ENCODE measurements at regions of chr1 and their contacts with region 1.

Region 1: DNA sequence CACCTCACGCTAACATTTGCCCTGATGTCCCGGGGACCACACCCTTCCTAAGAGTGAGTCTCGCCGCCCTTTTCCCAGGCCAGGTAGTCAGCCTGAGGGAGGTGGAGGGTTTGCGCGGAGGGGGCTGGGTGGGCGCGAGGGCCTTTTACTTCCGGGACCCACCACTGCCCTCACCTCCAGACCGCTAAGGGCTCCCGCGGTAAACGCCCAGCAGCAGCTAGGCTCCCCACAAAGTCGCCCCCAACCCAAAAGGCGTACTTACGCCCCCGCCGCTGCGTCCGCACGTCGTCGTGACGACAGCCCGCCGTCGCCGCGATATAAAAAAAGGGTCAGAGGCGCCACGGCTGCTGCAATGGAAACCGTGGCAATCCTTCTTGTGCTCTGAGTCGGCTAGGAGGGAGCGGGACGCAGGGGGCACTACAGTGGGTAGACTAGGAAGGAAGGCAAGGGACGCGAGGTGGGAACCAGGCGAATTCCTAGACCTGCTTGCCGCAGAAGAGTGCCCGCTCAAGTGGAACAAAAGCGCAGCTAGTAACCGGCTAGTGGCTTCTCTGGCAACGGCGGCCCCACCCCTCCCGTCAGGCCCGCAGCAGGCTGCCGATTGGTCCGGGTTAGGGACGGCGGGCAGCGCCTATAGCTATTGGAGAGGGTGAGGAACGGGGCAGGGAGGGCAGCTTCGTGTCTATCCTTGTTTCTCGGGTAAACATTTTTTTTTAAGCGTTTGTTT is at the start of gene ODF2L:
- DNase-seq: peak; percentile 90
- ATAC-seq: peak; percentile 99
- H3K4me3 ChIP-seq: peak within 1 kb of the TSS; percentile 83 to 98 (median 87)
- H3K4me3 Mint-ChIP-seq: peak within 1 kb of the TSS; percentile 99
- H3K27ac ChIP-seq: peak within 1 kb of the TSS; percentile 82 to 90
- H3K27ac Mint-ChIP-seq: peak within 1 kb of the TSS; percentile 97
- H3K4me1 ChIP-seq: peaks cover 12 to 15% of the 10 kb centered on the region in 2 donors
- H3K4me1 Mint-ChIP-seq: peaks cover 36% of the 10 kb centered on the region
- H3K27me3 ChIP-seq: no peaks in the 10 kb centered on the region
- H3K27me3 Mint-ChIP-seq: no peaks in the 10 kb centered on the region
- CTCF ChIP-seq: no peak
- total RNA-seq, gene ODF2L: 61.3 and 65.9 TPM in 2 replicates

Region 2: DNA sequence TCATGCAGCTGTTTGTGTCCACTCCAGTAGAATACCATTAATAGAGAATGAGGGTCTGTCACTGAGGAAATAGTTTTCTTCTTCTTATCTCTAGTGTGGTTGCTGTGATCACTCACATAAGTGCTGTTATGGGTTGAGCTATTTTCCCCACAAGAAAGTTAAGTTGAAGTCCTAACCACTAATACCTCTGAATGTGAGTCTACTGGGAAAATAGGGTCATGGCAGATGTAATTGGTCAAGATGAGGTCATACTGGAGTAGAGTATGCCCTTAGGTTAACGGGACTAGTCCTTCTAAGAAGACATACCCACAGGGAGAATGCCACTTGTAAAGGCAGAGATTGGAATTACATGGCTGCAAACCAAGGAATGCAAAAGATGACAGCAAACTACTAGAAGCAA is 168.9 kb before region 1 on chr1:
- CTCF ChIA-PET with region 1: no interaction called
- POLR2A ChIA-PET with region 1: no interaction called
- intact Hi-C with region 1: no loop called
- DNase-seq: no peak
- ATAC-seq: no peak
- H3K4me3 ChIP-seq: no peak overlapping the region
- H3K4me3 Mint-ChIP-seq: no peak overlapping the region
- H3K27ac ChIP-seq: no peak overlapping the region
- H3K27ac Mint-ChIP-seq: no peak overlapping the region
- H3K4me1 ChIP-seq: no peaks in the 10 kb centered on the region
- H3K4me1 Mint-ChIP-seq: no peaks in the 10 kb centered on the region
- H3K27me3 ChIP-seq: no peaks in the 10 kb centered on the region
- H3K27me3 Mint-ChIP-seq: peaks cover 7% of the 10 kb centered on the region
- CTCF ChIP-seq: no peak

Region 3: GRCh38 chr1:86380257-86380861 is 15.6 kb before region 1 on chr1:
- CTCF ChIA-PET with region 1: interaction called, 17 read pairs
- POLR2A ChIA-PET with region 1: no interaction called
- intact Hi-C with region 1: loop called (anchors 1 kb)
- DNase-seq: peak; percentile 68
- ATAC-seq: peak; percentile 63
- H3K4me3 ChIP-seq: no peak overlapping the region
- H3K4me3 Mint-ChIP-seq: no peak overlapping the region
- H3K27ac ChIP-seq: no peak overlapping the region
- H3K27ac Mint-ChIP-seq: no peak overlapping the region
- H3K4me1 ChIP-seq: peaks cover 0 to 4% of the 10 kb centered on the region in 2 donors
- H3K4me1 Mint-ChIP-seq: peaks cover 8% of the 10 kb centered on the region
- H3K27me3 ChIP-seq: no peaks in the 10 kb centered on the region
- H3K27me3 Mint-ChIP-seq: no peaks in the 10 kb centered on the region
- CTCF ChIP-seq: peak; percentile 88

Region 4: GRCh38 chr1:86616871-86617270 is 220.9 kb after region 1 on chr1:
- CTCF ChIA-PET with region 1: no interaction called
- POLR2A ChIA-PET with region 1: no interaction called
- intact Hi-C with region 1: loop called (anchors 1 kb)
- DNase-seq: peak; percentile 88
- ATAC-seq: peak; percentile 99
- H3K4me3 ChIP-seq: peak overlapping the region in 1 of 5 experiments; percentile 31
- H3K4me3 Mint-ChIP-seq: peak overlapping the region; percentile 27
- H3K27ac ChIP-seq: peak overlapping the region; percentile 65 to 77
- H3K27ac Mint-ChIP-seq: peak overlapping the region; percentile 70
- H3K4me1 ChIP-seq: peaks cover 22 to 23% of the 10 kb centered on the region in 2 donors
- H3K4me1 Mint-ChIP-seq: peaks cover 42% of the 10 kb centered on the region
- H3K27me3 ChIP-seq: no peaks in the 10 kb centered on the region
- H3K27me3 Mint-ChIP-seq: no peaks in the 10 kb centered on the region
- CTCF ChIP-seq: no peak

Region 5: DNA sequence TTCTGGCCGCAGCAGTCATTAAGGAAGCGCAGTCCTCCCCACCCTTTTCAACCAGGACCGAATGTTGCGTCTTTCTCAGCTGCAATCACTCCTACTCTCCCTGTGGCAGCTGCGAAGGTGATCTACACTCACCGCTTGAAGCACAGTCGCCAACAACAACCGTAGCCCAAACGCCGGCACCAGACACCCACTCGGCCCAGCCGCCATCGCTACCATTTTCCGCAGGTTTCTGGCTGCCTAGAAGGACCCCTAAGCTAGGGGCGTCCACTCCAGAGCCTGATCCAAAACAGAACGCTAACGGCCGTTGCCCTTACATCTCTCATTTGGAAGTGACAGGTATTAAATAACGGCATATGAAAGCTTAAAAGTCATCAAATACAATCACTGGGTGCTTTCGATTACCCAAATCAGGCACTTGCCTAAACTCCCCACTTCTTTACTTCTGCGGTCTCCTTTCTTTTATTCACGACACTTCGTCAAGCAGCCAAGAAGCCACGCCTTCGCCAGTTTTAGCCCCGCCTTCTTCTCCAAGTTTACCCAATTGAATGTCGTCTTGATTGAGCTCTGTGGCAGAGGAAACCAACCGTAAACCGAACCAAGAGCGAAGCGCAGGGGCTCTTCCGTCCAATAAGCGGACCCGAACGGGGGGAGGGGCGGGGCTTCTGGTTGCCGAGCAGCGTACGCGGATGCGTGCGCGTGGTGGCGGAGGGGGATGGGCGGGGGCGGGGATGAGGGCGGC is 518.1 kb after region 1 on chr1 and contains the start of gene SELENOF:
- CTCF ChIA-PET with region 1: no interaction called
- POLR2A ChIA-PET with region 1: no interaction called
- intact Hi-C with region 1: loop called (anchors 1 kb)
- DNase-seq: peak; percentile 100
- ATAC-seq: peak; percentile 87
- H3K4me3 ChIP-seq: peak within 1 kb of the TSS; percentile 91 to 100 (median 94)
- H3K4me3 Mint-ChIP-seq: no peak within 1 kb of the TSS
- H3K27ac ChIP-seq: peak within 1 kb of the TSS; percentile 94 to 97
- H3K27ac Mint-ChIP-seq: no peak within 1 kb of the TSS
- H3K4me1 ChIP-seq: peaks cover 31 to 34% of the 10 kb centered on the region in 2 donors
- H3K4me1 Mint-ChIP-seq: peaks cover 48% of the 10 kb centered on the region
- H3K27me3 ChIP-seq: no peaks in the 10 kb centered on the region
- H3K27me3 Mint-ChIP-seq: no peaks in the 10 kb centered on the region
- CTCF ChIP-seq: no peak
- total RNA-seq, gene SELENOF: 178 and 185 TPM in 2 replicates

Region 6: DNA sequence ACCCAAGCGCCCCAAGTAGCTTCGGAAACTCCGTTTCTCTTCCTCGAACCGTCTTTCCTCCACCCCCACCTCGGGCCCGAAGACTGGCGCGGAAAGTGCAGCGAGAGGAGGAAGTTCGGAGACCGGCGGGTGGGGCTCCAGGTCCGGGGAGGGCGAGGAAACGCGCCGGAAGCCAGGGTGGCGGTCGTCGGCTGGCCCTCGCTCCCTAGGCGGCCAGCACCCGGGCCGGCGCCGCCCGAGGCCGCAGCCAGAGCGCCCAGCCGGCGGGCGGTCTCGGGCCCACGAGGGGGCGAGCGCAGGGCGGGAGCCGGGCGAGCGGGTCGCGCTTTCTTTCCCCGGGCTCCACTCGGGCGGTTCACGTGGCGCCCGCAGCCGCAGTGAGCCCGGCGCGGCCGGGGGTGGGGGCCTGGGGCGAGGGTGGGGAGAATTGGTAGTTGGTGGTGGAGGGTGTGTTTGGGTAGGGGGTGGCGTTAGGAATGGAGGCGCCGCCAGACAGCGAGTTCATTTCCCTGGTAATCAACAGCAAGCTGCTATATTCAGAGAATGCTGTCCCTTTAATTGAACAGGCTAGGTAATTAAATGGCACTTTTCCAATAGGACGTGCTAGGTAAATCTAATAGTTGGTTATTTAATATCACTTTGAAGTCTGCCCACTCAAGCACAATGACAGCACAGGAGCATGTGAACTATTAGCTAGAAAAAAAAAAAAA is 939.4 kb after region 1 on chr1:
- CTCF ChIA-PET with region 1: no interaction called
- POLR2A ChIA-PET with region 1: no interaction called
- intact Hi-C with region 1: loop called (anchors 5 kb)
- DNase-seq: peak; percentile 79
- ATAC-seq: peak; percentile 63
- H3K4me3 ChIP-seq: peak overlapping the region; percentile 47 to 72 (median 66)
- H3K4me3 Mint-ChIP-seq: peak overlapping the region; percentile 83
- H3K27ac ChIP-seq: peak overlapping the region; percentile 46 to 82
- H3K27ac Mint-ChIP-seq: peak overlapping the region; percentile 94
- H3K4me1 ChIP-seq: peaks cover 46 to 49% of the 10 kb centered on the region in 2 donors
- H3K4me1 Mint-ChIP-seq: peaks cover 57% of the 10 kb centered on the region
- H3K27me3 ChIP-seq: no peaks in the 10 kb centered on the region
- H3K27me3 Mint-ChIP-seq: no peaks in the 10 kb centered on the region
- CTCF ChIP-seq: peak; percentile 42